ENCODE measurements at regions of chr6 and their contacts with region 1.

Region 1: GRCh38 chr6:43228951-43229802 is at the start of gene DNPH1:
- DNase-seq: peak; percentile 81
- ATAC-seq: peak; percentile 92
- H3K4me3 Mint-ChIP-seq: peak within 1 kb of the TSS; percentile 84
- H3K27ac Mint-ChIP-seq: peak within 1 kb of the TSS; percentile 85
- H3K4me1 Mint-ChIP-seq: peaks cover 43% of the 10 kb centered on the region
- H3K27me3 Mint-ChIP-seq: peaks cover 12% of the 10 kb centered on the region
- total RNA-seq, gene DNPH1: 54.0 to 60.0 TPM

Region 2: GRCh38 chr6:43216200-43216599 is 13.0 kb before region 1 on chr6:
- CTCF ChIA-PET with region 1: interaction called, 13 read pairs
- DNase-seq: no peak
- ATAC-seq: no peak
- H3K4me3 Mint-ChIP-seq: no peak overlapping the region
- H3K27ac Mint-ChIP-seq: no peak overlapping the region
- H3K4me1 Mint-ChIP-seq: no peaks in the 10 kb centered on the region
- H3K27me3 Mint-ChIP-seq: no peaks in the 10 kb centered on the region

Region 3: DNA sequence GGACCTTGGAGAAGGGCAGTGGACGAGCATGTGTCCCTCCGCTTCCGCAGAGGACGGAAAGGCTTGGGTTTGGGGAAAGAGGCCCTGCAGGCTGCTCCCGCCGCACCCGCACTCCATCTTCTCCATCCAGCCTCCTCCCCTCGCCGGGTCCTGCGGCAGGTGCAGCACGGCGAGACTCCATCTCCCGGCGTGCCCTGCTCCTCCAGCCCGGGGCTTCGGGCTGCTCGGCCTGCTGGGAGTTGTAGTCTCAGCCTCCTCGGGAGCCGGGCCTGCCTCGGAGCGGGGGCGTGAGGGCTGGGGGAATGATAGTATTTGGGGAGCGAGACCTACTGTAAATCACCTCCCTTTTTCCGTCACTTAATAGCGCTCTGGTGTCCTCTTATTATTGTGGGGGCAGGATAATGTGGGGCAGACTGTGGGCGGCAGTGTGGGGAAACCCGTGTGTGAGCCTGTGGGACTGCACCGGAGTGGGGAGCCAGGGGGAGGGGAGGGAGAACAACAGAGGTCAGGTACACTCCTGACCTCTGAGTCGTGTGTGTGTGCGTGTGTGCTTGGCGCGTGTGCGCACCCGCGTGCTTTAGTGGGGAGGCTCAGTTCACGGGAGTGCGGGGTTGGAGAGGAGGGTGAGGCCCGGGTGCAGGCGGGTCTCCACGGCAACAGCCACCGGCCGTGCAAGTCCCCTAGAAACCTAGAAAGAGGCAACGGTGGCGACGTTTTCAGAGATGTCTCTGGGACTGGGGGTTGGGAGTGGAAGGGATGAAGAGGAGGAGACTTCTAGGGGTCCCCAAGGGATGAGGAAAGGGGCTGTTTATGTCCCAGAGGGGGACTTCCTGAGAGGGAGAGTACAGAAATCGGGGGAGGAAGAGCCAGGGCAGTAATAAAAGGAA is 18.2 kb after region 1 on chr6:
- CTCF ChIA-PET with region 1: interaction called, 30 read pairs
- DNase-seq: peak; percentile 91
- ATAC-seq: peak; percentile 99
- H3K4me3 Mint-ChIP-seq: peak overlapping the region; percentile 74
- H3K27ac Mint-ChIP-seq: peak overlapping the region; percentile 66
- H3K4me1 Mint-ChIP-seq: peaks cover 25% of the 10 kb centered on the region
- H3K27me3 Mint-ChIP-seq: peaks cover 20% of the 10 kb centered on the region

Region 4: DNA sequence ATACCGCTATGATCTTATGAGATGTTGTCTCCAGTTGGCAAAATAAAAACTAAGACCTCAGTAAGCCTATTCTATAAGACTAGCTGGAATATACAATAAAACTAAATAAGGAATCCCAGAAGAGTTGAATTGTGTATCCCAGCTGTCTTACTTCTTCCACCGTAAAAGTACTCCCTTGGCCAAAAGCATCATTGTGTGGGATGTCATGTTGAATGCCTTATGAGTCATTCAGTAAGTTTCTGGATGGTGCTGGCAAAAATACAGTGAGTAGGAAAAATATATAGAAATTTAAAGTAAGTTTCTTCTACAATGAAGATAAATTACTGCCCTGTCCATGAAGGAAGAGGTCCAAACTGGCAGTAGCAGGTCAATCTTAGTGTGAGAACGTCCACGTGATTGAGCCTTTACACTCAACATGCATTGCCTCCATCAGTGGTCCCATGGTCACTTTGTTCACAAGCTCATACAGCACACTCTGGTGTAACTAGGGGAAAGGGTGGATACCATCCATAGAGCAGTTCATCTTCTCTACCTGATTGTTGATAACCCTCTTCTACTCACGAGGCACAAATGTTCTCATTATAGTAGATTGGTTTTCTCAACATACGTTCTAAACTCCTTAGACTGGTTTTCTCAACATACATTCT is 154.0 kb after region 1 on chr6:
- CTCF ChIA-PET with region 1: interaction called, 13 read pairs
- DNase-seq: no peak
- ATAC-seq: no peak
- H3K4me3 Mint-ChIP-seq: peak overlapping the region; percentile 40
- H3K27ac Mint-ChIP-seq: peak overlapping the region; percentile 90
- H3K4me1 Mint-ChIP-seq: peaks cover 40% of the 10 kb centered on the region
- H3K27me3 Mint-ChIP-seq: peaks cover 27% of the 10 kb centered on the region

Measured in activated CD8-positive, alpha-beta memory T cell treated with anti-CD3 and anti-CD28 coated beads, Interleukin-2, amount 10 ng/mL, durations not matched to agents 7 days and 5 days (primary cell).